AG04449 (cell line): ENCODE measurements at regions of chr1 and their contacts with region 1.

Region 1: GRCh38 chr1:150561974-150562445 is 12.8 kb downstream of the ADAMTSL4 start:
- DNase-seq: peak; percentile 57
- H3K4me3 ChIP-seq: peak overlapping the region; percentile 60
- CTCF ChIP-seq: no peak

Region 2: GRCh38 chr1:150464422-150464826 is 97.6 kb before region 1 on chr1:
- CTCF ChIA-PET with region 1: interaction called, 43 read pairs
- POLR2A ChIA-PET with region 1: no interaction called
- DNase-seq: no peak
- H3K4me3 ChIP-seq: no peak overlapping the region
- CTCF ChIP-seq: peak; percentile 71

Region 3: DNA sequence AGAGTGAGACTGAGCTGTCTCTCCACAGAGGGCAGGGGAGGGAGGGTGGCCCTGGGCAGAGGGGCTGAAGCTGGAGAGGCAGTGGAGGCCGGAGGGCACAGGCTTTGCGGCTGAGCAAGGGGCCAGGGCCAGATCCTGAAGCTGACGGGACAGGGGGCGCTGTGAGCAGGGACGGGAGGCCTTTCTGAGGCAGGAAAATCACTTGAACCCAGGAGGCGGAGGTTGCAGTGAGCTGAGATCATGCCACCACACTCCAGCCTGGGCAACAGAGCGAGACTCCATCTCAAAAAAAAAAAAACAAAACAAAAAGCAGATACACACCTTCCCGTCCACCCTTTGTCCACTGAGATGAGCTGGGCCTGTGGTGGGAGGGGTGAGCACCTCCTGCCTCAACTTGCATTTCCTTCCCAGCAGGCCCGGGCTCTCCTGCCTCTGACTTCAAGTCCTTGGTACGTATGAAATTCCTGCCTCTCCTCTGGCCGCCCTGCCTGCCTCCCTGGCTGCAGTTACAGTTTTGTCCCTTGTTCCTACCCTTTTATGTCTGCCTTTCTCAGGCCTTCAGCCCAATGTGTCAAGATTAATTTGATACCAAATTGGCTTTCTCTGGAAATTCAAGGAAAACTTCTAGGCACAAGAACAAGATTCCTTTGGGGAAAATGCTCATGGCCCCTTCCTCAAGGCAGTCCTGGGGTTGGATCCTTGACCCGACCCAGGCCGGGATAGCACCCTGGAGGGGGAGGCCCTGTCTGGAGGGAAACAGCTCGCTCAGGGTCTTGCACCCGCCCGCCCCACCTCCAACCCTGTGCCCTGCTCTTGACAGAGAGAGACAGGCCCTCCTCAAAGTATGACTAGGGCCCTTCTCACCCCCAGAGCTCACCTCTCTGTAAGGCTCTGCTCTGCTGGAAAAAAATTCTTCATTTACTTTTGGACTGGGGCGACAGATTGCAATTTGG is 24.0 kb before region 1 on chr1:
- CTCF ChIA-PET with region 1: interaction called, 49 read pairs
- POLR2A ChIA-PET with region 1: interaction called, 3 read pairs
- DNase-seq: no peak
- H3K4me3 ChIP-seq: no peak overlapping the region
- CTCF ChIP-seq: no peak

Region 4: GRCh38 chr1:150578965-150579798 is 17.2 kb after region 1 on chr1 and contains the start of gene MCL1:
- CTCF ChIA-PET with region 1: interaction called, 69 read pairs
- POLR2A ChIA-PET with region 1: interaction called, 135 read pairs
- DNase-seq: peak; percentile 84
- H3K4me3 ChIP-seq: peak within 1 kb of the TSS; percentile 100
- CTCF ChIP-seq: no peak

Region 5: GRCh38 chr1:150629115-150629928 is 67.3 kb after region 1 on chr1 and contains the start of gene ENSA:
- CTCF ChIA-PET with region 1: interaction called, 315 read pairs
- POLR2A ChIA-PET with region 1: interaction called, 5 read pairs
- DNase-seq: peak; percentile 99
- H3K4me3 ChIP-seq: peak within 1 kb of the TSS; percentile 75
- CTCF ChIP-seq: no peak

Region 6: GRCh38 chr1:150724336-150724735 is 162.3 kb after region 1 on chr1:
- CTCF ChIA-PET with region 1: no interaction called
- POLR2A ChIA-PET with region 1: no interaction called
- DNase-seq: no peak
- H3K4me3 ChIP-seq: no peak overlapping the region
- CTCF ChIP-seq: no peak

Region 7: GRCh38 chr1:150995896-150996295 is 433.9 kb after region 1 on chr1:
- CTCF ChIA-PET with region 1: interaction called, 12 read pairs
- POLR2A ChIA-PET with region 1: no interaction called
- DNase-seq: no peak
- H3K4me3 ChIP-seq: no peak overlapping the region
- CTCF ChIP-seq: peak; percentile 51